GM10248 (cell line): ENCODE measurements at regions of chr7 and their contacts with region 1.

Region 1: GRCh38 chr7:98251841-98252639 is at the start of gene TECPR1:
- DNase-seq: peak; percentile 99
- CTCF ChIP-seq: no peak

Region 2: GRCh38 chr7:98266840-98267239 is 14.8 kb after region 1 on chr7:
- CTCF ChIA-PET with region 1: interaction called, 13 read pairs
- POLR2A ChIA-PET with region 1: no interaction called
- DNase-seq: no peak
- CTCF ChIP-seq: no peak